ENCODE measurements at regions of chrX and their contacts with region 1.

Region 1: GRCh38 chrX:72666451-72666850 is 47.7 kb downstream of the PHKA1 start:
- DNase-seq: no peak
- ATAC-seq: no peak
- H3K4me3 ChIP-seq: no peak overlapping the region
- H3K27ac ChIP-seq: no peak overlapping the region
- H3K4me1 ChIP-seq: no peaks in the 10 kb centered on the region
- H3K27me3 ChIP-seq: no peaks in the 10 kb centered on the region
- CTCF ChIP-seq: no peak
- EP300 ChIP-seq: no peak
- POLR2A ChIP-seq: no peak
- RAD21 ChIP-seq: no peak

Region 2: DNA sequence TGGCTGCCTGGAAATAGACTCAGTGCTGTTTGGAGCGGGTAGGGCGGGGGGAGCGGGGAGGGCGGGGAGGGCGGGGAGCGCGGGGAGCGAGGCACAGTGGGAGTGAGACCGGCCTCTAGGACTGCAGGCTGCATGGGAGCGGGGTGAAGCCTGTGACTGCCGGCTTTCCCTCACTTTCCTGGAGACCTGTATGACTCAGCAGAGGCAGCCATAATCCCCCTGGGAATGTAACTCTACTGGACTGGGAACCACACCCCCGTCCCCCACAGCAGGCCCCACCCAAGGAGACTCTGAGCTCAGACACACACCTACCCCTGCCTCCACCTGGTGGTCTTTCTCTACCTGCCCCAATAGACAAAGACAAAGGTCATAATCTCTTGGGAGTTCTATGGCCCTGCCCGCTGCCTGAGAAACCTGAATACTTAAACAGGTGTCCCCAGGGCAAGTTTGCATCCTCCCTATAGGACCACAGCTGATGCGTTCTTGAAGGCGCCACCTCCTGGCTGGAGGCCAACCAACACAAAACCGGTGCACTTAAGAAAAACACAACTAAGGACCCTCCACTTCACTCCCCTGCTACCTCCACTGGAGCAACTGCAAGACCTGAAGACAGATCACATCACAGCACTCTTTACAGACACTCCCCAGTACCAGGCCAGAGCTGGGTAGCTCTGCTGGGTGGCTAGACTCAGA is 111.9 kb before region 1 on chrX:
- CTCF ChIA-PET with region 1: no interaction called
- POLR2A ChIA-PET with region 1: no interaction called
- RAD21 ChIA-PET with region 1: no interaction called
- SMC1A ChIA-PET with region 1: no interaction called
- in situ Hi-C with region 1: no loop called
- intact Hi-C with region 1: no loop called
- DNase-seq: no peak
- ATAC-seq: no peak
- H3K4me3 ChIP-seq: no peak overlapping the region
- H3K27ac ChIP-seq: no peak overlapping the region
- H3K4me1 ChIP-seq: no peaks in the 10 kb centered on the region
- H3K27me3 ChIP-seq: no peaks in the 10 kb centered on the region
- CTCF ChIP-seq: no peak
- EP300 ChIP-seq: no peak
- POLR2A ChIP-seq: no peak
- RAD21 ChIP-seq: no peak

Region 3: DNA sequence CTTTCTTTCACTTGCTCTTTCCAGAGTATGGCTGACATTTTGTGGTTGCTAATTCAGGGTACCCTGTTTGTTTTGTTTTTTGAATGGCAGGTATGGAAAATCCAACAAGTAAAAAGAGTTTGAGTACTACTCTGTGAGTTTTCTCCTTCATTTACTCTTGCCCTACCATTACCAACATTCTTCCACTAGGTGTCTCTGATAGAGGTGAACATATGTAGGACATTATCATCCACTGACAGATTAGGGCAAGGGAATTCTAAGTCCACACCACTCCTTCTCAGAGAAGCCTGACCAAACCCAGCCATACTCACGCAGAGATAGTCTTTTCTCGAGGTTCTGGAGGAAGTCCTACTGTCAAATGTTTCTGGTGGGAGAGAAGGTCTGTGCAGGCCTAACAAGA is 57.1 kb before region 1 on chrX:
- CTCF ChIA-PET with region 1: no interaction called
- POLR2A ChIA-PET with region 1: no interaction called
- RAD21 ChIA-PET with region 1: no interaction called
- SMC1A ChIA-PET with region 1: no interaction called
- in situ Hi-C with region 1: no loop called
- intact Hi-C with region 1: no loop called
- DNase-seq: no peak
- ATAC-seq: peak; percentile 38; the same call in 1 of the 3 replicates
- H3K4me3 ChIP-seq: no peak overlapping the region
- H3K27ac ChIP-seq: no peak overlapping the region
- H3K4me1 ChIP-seq: no peaks in the 10 kb centered on the region
- H3K27me3 ChIP-seq: no peaks in the 10 kb centered on the region; a peak in 1 of 4 replicates
- CTCF ChIP-seq: peak in 2 of 3 experiments; percentile 12 to 21; a peak in 2 of 6 replicates
- EP300 ChIP-seq: no peak
- POLR2A ChIP-seq: no peak
- RAD21 ChIP-seq: no peak; the same call in 1 of the 2 replicates

Region 4: DNA sequence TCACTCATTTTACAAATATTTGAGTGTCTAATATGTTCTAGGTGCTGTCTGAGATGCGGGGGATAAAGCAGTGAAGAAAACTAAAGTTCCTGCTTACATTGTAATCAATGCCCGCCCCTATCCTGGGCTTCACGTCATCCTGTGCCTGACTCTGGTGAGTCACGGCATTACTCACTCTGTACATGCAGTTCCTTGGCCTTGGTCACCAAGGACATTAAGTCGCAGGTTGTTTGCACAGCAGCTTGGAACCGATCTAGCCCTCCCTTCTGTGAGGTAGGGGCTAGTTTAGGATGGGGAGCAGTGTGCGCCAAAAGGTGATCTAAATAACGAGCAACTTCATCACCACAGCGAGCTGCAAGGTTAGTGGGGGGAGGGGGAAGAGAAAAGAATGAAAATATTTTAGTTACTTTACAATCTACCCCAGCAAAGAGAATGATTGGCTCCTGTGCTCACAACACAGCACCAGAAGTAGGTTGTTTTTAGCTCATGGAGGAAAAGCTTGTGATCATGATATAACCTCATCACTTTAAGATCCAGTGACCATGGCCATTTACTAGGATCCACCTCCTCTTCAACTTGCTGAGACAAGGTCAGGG is 45.8 kb before region 1 on chrX:
- CTCF ChIA-PET with region 1: no interaction called
- POLR2A ChIA-PET with region 1: no interaction called
- RAD21 ChIA-PET with region 1: no interaction called
- SMC1A ChIA-PET with region 1: no interaction called
- in situ Hi-C with region 1: loop called (anchors 5 kb)
- intact Hi-C with region 1: no loop called
- DNase-seq: no peak
- ATAC-seq: no peak
- H3K4me3 ChIP-seq: no peak overlapping the region
- H3K27ac ChIP-seq: no peak overlapping the region
- H3K4me1 ChIP-seq: no peaks in the 10 kb centered on the region
- H3K27me3 ChIP-seq: no peaks in the 10 kb centered on the region
- CTCF ChIP-seq: no peak
- EP300 ChIP-seq: no peak
- POLR2A ChIP-seq: no peak
- RAD21 ChIP-seq: no peak